Aorta (tissue), 5 donors: ENCODE measurements at regions of chr6 and their contacts with region 1.

Region 1: GRCh38 chr6:148495029-148495428 is 152.4 kb downstream of the SASH1 start:
- DNase-seq: no peak
- ATAC-seq: no peak
- H3K4me3 ChIP-seq: no peak overlapping the region
- H3K27ac ChIP-seq: peak overlapping the region; percentile 57 to 67
- H3K4me1 ChIP-seq: peaks cover 6 to 21% of the 10 kb centered on the region in 2 donors
- H3K27me3 ChIP-seq: no peaks in the 10 kb centered on the region

Region 2: DNA sequence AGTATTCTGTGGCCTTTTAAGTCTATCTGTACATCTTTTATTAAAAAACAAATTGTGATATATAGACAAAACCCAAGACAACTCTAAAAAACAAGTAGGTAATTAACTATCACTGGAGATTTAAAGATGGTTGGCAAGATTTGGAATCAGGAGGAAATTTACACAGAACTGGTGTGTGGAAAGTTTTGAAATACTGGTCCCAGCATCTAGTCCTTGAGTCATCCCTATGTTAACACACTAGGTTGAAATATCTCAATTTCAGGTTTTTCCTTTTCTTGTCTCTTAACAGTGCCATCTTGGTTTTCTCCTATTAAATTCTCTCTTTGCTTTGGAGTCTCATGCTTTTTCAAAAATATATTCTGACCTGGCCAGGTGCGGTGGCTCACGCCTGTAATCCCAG is 124.9 kb before region 1 on chr6:
- intact Hi-C with region 1: no loop called
- DNase-seq: no peak
- ATAC-seq: no peak
- H3K4me3 ChIP-seq: no peak overlapping the region
- H3K27ac ChIP-seq: no peak overlapping the region
- H3K4me1 ChIP-seq: peaks cover 0 to 4% of the 10 kb centered on the region in 2 donors
- H3K27me3 ChIP-seq: no peaks in the 10 kb centered on the region

Region 3: GRCh38 chr6:148524976-148525375 is 29.9 kb after region 1 on chr6:
- intact Hi-C with region 1: loop called in 1 of 2 experiments (anchors 1 kb)
- DNase-seq: no peak
- ATAC-seq: no peak
- H3K4me3 ChIP-seq: peak overlapping the region in 1 of 2 donors; percentile 69
- H3K27ac ChIP-seq: peak overlapping the region; percentile 80 to 98
- H3K4me1 ChIP-seq: peaks cover 0 to 3% of the 10 kb centered on the region in 2 donors
- H3K27me3 ChIP-seq: no peaks in the 10 kb centered on the region

Region 4: GRCh38 chr6:148578245-148578732 is 83.3 kb after region 1 on chr6:
- intact Hi-C with region 1: no loop called
- DNase-seq: peak; percentile 89 to 92
- ATAC-seq: peak; percentile 95
- H3K4me3 ChIP-seq: no peak overlapping the region
- H3K27ac ChIP-seq: no peak overlapping the region
- H3K4me1 ChIP-seq: peaks cover 0 to 2% of the 10 kb centered on the region in 2 donors
- H3K27me3 ChIP-seq: peaks cover 0 to 4% of the 10 kb centered on the region in 2 donors